Caco-2 (cell line): ENCODE measurements at regions of chr1 and their contacts with region 1.

Region 1: GRCh38 chr1:39738622-39739366 is at the start of gene PPIE:
- DNase-seq: peak; percentile 81 to 91
- H3K4me3 ChIP-seq: peak within 1 kb of the TSS; percentile 79
- H3K4me3 Mint-ChIP-seq: peak within 1 kb of the TSS; percentile 94
- H3K27ac Mint-ChIP-seq: peak within 1 kb of the TSS; percentile 95
- H3K4me1 ChIP-seq: peaks cover 11% of the 10 kb centered on the region; the same call in 1 of the 2 replicates
- H3K4me1 Mint-ChIP-seq: peaks cover 10% of the 10 kb centered on the region
- H3K27me3 ChIP-seq: no peaks in the 10 kb centered on the region
- H3K27me3 Mint-ChIP-seq: peaks cover 2% of the 10 kb centered on the region
- CTCF ChIP-seq: no peak
- total RNA-seq, gene PPIE: 39.2 and 41.7 TPM in 2 replicates

Region 2: GRCh38 chr1:39462074-39462473 is 276.7 kb before region 1 on chr1:
- CTCF ChIA-PET with region 1: no interaction called
- POLR2A ChIA-PET with region 1: no interaction called
- intact Hi-C with region 1: no loop called
- DNase-seq: no peak
- H3K4me3 ChIP-seq: no peak overlapping the region
- H3K4me3 Mint-ChIP-seq: no peak overlapping the region
- H3K27ac Mint-ChIP-seq: no peak overlapping the region
- H3K4me1 ChIP-seq: no peaks in the 10 kb centered on the region
- H3K4me1 Mint-ChIP-seq: no peaks in the 10 kb centered on the region
- H3K27me3 ChIP-seq: no peaks in the 10 kb centered on the region
- H3K27me3 Mint-ChIP-seq: no peaks in the 10 kb centered on the region
- CTCF ChIP-seq: no peak

Region 3: DNA sequence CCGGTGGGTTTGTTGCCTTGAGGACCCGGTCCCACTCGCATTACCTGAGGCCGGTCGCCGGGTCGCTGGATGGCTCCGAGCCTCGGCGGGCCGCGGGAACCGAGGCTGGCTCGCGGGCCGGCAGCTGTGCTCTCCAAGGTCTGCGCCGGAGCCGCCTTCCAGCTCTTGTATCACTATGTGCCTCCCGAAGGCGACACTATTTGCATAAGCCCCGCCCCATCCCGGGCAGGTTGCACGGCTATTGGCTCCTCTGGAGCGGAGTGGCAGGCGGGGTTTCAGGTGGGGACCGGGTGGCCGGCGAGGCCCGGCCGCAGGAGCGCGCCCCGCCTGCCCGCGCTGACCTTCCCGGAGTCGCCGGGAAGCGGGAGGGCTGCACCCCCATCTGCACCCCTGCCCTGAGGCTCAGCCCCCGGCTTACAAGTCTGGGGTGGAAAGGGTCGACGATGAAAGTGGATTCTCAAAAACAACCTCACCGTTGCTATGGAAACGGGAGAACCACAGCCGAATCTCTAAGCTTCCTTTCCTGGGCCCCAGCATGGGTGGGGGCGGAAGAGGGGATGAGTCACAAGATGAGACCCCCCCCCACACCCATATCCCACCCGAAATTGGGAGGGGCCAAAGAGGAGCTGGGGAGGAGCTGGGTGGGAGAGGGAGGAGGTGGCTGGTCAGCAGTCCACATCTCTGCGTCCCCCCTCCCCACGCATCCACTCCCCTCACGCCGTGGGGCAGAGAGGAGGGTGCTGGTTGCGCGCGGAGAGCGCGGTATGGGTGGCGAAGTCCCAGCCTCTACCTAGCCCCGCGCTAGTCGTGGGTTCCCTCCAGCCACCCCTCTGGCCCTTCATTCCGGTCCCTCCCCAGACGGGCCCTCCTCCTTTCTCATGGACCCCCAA is 47.3 kb before region 1 on chr1 and contains the start of gene HPCAL4:
- CTCF ChIA-PET with region 1: no interaction called
- POLR2A ChIA-PET with region 1: interaction called, 11 read pairs
- intact Hi-C with region 1: no loop called
- DNase-seq: peak; percentile 92
- H3K4me3 ChIP-seq: peak within 1 kb of the TSS; percentile 30
- H3K4me3 Mint-ChIP-seq: peak within 1 kb of the TSS; percentile 58
- H3K27ac Mint-ChIP-seq: no peak within 1 kb of the TSS
- H3K4me1 ChIP-seq: peaks cover 4% of the 10 kb centered on the region; the same call in 1 of the 2 replicates
- H3K4me1 Mint-ChIP-seq: no peaks in the 10 kb centered on the region
- H3K27me3 ChIP-seq: no peaks in the 10 kb centered on the region; the same call in 1 of the 2 replicates
- H3K27me3 Mint-ChIP-seq: peaks cover 15% of the 10 kb centered on the region
- CTCF ChIP-seq: no peak
- total RNA-seq, gene HPCAL4: 0.07 and 0.14 TPM in 2 replicates

Region 4: DNA sequence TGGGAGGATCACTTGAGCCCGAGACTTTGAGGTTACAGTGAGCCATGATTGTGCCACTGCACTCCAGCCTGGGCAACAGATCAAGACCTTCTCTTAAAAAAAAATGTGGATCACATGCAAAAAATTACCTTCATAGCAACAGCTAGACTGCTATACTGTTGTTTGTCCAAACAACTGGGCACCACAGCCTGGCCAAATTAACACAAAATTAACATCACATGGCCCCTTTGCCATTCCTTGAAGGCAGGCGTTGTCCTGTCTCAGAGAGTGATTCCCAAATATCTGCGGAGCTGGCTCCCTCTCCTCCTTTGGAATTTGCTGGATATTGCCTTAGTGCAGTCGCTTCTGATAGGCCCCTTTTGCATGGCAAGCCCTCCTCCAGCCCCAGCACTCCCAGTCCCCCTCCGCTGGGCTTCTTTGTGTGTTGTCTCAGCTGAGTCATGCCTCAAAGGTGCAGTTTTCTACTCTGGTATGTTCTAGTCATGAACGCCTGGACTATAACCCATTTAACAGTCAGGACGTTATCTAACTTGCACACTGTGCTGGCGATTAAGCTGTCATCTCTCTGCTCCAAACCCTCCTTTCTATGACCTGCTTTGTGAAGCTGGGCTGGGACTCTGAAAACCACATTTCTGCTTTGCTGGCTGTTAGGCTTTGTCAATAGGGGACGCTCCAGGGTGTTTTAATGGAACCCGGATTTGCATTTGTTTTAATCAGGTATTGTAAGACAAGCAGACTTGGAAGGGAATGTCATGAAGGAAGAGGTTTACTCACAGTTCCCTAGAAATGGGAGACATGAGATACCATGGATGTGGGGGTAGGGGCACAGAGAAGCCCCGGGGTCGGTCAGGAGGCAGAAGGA is 27.5 kb before region 1 on chr1:
- CTCF ChIA-PET with region 1: no interaction called
- POLR2A ChIA-PET with region 1: no interaction called
- intact Hi-C with region 1: no loop called
- DNase-seq: peak; percentile 26 to 47
- H3K4me3 ChIP-seq: no peak overlapping the region
- H3K4me3 Mint-ChIP-seq: no peak overlapping the region
- H3K27ac Mint-ChIP-seq: peak overlapping the region; percentile 2
- H3K4me1 ChIP-seq: peaks cover 6% of the 10 kb centered on the region
- H3K4me1 Mint-ChIP-seq: peaks cover 10% of the 10 kb centered on the region
- H3K27me3 ChIP-seq: no peaks in the 10 kb centered on the region
- H3K27me3 Mint-ChIP-seq: no peaks in the 10 kb centered on the region
- CTCF ChIP-seq: no peak

Region 5: GRCh38 chr1:39754906-39755504 is 16.2 kb after region 1 on chr1:
- CTCF ChIA-PET with region 1: no interaction called
- POLR2A ChIA-PET with region 1: no interaction called
- intact Hi-C with region 1: no loop called
- DNase-seq: no peak
- H3K4me3 ChIP-seq: no peak overlapping the region
- H3K4me3 Mint-ChIP-seq: no peak overlapping the region
- H3K27ac Mint-ChIP-seq: no peak overlapping the region
- H3K4me1 ChIP-seq: no peaks in the 10 kb centered on the region
- H3K4me1 Mint-ChIP-seq: no peaks in the 10 kb centered on the region
- H3K27me3 ChIP-seq: no peaks in the 10 kb centered on the region
- H3K27me3 Mint-ChIP-seq: no peaks in the 10 kb centered on the region
- CTCF ChIP-seq: no peak

Region 6: DNA sequence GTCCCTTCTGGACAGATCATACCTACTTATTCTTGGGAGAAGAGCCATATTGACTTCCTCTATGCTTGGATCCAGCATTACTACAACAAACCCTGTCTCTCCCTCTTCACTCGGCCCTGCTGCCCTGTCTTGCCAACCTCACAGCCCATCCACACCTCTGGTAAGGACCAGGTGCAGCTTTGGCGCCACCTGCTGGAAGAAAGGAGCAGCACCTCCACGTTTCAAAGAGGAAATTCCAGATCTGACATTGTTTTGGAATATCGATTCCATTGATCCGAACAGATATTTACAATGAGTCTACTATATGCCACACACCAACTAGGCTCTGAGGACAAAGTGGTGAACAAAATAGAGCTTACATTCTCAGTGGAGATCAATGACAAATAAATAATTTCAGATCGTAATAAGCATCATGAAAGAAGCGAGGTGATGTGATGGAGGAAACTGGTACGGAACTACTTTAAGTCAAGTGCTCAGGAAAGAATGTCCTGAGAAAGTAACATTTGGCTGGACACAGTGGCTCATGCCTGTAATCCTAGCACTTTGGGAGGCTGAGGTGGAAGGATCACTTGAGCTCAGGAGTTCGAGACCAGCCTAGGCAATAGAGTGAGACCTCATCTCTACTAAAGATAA is 234.8 kb after region 1 on chr1:
- CTCF ChIA-PET with region 1: no interaction called
- POLR2A ChIA-PET with region 1: no interaction called
- intact Hi-C with region 1: no loop called
- DNase-seq: peak; percentile 65 to 67
- H3K4me3 ChIP-seq: no peak overlapping the region
- H3K4me3 Mint-ChIP-seq: no peak overlapping the region
- H3K27ac Mint-ChIP-seq: no peak overlapping the region
- H3K4me1 ChIP-seq: peaks cover 3% of the 10 kb centered on the region; the same call in 1 of the 2 replicates
- H3K4me1 Mint-ChIP-seq: peaks cover 7% of the 10 kb centered on the region
- H3K27me3 ChIP-seq: no peaks in the 10 kb centered on the region
- H3K27me3 Mint-ChIP-seq: no peaks in the 10 kb centered on the region
- CTCF ChIP-seq: peak; percentile 76 to 80